ENCODE measurements at regions of chr3 and their contacts with region 1.

Region 1: DNA sequence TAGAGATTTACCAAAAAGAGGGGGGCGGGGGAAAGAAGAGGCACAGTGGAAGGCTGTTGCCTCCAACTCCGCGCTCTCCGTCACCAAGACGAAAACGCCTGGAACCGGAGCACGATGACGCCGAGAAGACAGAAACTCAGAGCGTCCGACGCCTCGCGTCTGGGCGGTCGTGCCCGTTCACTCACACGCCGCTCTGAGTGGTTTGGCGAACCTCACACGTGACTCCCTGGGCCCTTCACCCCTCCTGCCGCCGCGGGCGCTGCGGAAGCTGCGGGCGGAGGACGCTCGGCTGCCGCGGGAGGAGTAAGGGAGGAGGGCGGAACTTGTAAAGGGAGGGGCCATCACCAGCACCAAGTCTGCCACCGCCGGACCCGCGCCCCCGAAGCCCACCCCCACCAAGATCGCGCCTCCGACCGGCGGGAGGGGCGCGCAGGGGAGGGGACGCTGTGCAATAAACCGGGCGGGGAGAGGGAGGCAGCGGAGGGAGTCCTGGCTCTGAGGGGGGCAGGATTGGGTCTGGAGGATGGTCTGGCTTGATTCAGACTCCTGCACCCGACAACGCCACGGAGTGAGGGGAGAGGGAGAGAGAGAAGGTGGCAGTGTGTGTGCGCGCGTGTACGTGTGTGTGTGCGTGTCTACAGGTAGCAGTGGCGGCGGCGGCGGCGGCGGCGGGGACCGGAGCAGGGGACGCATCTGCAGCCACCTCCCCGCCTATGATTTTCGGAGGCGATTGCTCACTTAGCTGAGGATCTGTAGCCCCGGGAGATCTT is 1.9 kb upstream of the NLGN1 start:
- DNase-seq: peak; percentile 93
- ATAC-seq: peak; percentile 96

Region 2: DNA sequence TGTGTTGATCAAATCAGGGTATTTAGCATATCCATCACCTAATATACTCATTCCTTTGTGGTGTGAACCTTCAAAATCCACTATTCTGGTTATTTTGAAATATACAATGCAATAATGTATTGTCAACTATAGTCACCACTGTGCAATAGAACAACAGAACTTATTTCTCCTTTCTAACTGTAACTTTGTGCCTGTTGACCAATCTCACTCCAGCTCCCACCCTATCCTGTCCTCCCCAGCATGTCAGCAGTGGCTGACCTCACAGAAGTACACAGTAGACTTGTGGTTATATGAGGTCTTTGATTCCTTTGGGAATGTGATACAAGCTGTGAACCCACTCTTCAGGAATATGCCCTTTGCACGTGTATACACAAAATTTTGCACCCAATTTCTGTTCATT is 580.9 kb before region 1 on chr3:
- intact Hi-C with region 1: loop called (anchors 5 kb)
- DNase-seq: no peak
- ATAC-seq: no peak

Region 3: DNA sequence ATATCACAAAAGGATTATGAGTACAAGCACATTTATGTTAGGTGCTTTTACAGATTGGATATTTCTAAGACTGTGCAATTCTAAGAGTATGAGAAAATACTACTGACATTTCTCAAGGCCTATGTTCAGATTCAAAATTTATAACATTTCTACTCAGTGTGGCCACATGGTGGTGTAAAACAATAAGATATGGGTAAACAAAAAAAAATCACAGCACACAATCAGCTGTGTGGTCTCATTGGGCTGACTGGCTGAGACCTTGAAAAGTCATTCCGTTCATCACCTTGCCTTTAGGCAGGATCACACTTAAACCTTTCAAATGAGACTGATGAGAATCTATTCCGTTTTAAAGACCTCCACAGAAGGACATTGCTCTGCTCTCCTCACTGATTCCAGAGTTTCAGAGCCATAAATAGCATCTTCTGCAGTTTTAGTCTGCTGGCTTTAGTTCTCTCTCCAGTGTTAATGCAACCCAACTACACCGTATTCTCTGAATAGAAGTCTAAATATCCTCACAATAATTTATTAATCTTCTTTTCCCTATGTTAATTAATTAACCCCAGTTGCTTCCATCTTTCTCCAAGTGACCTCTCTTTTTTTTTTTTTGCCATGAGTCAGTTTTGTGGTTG is 412.7 kb before region 1 on chr3:
- intact Hi-C with region 1: loop called (anchors 5 kb)
- DNase-seq: no peak
- ATAC-seq: peak; percentile 50

Region 4: DNA sequence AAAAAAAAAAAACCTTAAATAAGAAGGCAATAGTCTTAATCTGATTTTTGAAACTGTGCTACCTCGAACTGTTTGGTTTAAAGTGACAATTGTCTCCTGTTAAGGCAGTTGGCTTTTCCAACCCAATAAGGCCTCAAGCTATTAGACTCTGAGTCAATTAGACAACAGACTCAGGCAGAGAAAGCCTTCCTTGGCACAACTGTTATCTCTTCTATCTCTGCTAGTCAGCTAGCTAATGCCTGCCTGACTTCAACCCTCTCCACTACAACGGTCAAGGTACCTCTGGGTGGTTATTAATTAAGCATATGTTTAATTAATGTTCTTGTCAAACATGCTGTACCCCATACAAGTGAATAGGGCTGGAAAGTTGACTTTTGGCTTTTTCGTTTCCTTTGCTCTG is 108.2 kb before region 1 on chr3:
- intact Hi-C with region 1: no loop called
- DNase-seq: no peak
- ATAC-seq: no peak

Region 5: DNA sequence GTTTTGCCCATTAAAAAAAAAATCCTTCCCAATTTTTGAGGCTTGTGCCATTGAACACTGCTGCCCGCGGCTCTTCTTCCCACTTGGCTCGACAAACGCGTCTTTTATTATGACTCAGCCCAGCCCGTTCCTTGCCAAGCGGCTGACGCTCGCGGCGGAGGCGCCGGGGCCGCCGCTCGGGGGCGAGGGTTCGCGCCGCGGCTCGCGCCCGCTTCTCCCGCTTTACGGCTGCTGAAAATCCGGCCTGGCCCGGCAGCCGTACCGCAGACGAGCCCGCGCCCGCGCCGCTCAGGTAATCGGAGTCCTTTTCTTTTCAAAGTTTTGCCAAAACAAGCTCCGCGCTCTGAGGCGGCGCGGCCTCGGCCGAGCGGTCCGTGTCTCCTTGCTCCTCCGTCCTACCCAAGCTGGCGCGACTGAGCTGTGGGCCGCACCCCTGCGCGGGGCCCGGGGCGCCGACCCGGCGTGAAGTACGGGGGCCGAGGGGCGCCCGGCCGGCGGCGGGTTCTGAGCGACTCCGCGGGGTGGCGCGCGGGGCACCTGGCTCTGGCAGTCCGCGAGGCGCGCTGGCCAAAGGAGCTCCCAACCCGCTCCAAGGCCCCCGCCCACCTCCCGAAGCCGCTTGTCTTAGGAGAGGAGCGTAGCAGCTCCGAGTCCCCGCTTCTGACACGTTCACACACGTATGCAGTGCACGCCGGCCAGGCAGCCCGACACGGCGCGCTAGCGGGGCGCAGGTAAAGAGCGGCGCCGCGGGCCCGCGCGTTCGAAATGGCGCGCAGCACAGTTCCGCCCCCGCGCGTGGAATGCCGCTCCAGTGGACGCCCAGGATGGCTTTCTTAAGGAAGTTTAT is 1045.4 kb after region 1 on chr3:
- intact Hi-C with region 1: loop called (anchors 10 kb)
- DNase-seq: peak; percentile 88
- ATAC-seq: peak; percentile 89